BJ (cell line): ENCODE measurements at regions of chr1 and their contacts with region 1.

Region 1: DNA sequence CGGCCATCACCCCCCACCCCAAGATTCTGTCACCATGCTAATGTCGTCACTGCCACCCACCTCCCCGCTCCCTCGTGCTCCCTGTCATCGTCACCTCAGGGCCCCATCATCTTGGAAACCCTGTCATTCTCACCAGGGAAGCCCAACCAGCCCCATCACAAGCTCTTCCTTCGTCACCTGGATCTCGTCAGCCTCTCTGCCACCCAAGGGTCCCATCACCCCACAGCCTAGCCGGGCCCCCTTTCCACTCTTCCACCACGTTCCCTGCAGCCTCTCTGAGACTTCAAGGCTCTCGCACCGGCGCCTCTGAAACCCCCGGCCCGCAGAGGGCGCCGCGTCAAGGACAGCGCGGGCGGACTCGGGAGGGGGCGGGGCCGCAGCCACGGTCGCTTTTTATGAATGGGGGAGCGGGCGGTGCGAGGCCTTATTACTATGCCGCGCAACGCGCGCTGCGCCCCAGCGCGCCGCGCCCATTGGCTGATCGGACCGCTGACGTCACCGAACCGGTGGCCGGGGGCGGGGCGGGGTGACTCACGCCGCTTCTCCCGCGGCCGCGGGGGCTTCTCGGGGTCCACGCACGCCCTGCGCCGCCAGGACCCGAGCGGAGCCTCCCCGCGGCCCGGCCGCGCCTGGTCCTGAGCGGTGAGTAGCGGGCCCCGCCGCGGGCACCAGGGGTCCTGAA is at the start of gene GPR3:
- DNase-seq: no peak
- H3K4me3 ChIP-seq: peak within 1 kb of the TSS; percentile 70
- H3K27me3 ChIP-seq: no peaks in the 10 kb centered on the region
- CTCF ChIP-seq: peak; percentile 77
- polyA plus RNA-seq, gene GPR3: 1.0 and 1.8 TPM in 2 replicates

Region 2: DNA sequence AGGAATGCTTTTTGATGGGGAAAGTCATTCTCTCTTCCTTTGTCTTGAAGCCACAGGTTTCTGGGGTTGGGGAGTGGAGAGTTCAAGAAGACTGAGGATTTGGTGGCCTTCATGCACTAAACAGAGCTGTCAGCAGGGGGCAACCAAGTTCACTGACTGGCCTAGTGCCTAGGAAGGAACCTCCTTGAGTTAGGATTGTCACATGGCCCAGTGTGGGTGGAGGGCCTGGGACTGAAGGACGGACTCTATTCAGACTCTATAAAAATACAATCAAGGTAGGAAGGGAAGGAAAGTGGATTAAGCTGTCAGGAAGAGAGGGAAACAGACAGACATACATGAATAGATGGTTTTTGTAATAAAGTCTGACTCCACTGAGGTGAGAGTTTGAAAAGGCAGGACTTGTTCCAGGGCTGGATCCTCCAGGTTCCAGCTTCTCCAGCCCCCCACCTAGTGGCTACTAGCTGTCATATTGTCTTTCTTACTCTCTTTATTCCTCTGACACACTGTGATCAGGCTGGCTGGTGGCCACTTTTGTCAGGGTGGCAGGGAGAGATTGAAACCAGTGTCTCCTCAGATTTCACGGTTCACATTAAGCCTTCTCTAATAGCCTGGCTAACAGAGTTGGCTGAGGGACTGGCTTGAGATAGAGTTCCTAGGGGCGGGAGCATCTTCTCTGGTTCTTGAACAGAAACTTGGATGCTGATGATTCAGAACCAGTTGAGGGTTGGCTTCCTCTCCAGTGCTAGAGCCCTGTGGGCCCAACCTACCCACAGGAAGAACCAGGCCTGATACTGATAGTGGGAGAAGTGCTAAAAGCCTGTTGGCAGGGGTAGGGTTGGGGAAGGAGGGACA is 1116.4 kb before region 1 on chr1:
- CTCF ChIA-PET with region 1: no interaction called
- POLR2A ChIA-PET with region 1: no interaction called
- DNase-seq: peak; percentile 93
- H3K4me3 ChIP-seq: no peak overlapping the region
- H3K27me3 ChIP-seq: no peaks in the 10 kb centered on the region
- CTCF ChIP-seq: peak; percentile 81

Region 3: DNA sequence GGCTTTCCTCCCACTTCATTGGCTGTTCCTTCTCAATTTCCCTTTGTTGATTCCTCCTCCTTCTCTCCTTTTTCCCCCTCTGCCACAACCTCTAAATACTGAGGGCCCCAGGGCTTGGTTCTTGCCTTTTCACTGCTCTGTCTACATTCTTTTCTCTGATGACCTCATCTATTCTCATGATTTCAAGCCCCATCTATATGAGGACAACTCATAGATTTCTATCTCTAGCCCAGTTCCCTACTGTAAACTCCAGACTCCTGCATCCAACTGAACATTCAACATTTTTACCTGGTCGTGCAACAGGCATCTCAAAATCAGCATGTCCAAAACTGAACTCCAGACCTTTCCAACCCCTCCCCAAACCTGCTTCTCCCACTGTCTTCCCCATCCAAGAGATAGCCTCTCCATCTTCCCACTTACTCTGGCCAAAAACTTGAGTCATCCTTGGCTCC is 225.9 kb before region 1 on chr1:
- CTCF ChIA-PET with region 1: no interaction called
- POLR2A ChIA-PET with region 1: no interaction called
- DNase-seq: no peak
- H3K4me3 ChIP-seq: no peak overlapping the region
- H3K27me3 ChIP-seq: no peaks in the 10 kb centered on the region
- CTCF ChIP-seq: no peak

Region 4: DNA sequence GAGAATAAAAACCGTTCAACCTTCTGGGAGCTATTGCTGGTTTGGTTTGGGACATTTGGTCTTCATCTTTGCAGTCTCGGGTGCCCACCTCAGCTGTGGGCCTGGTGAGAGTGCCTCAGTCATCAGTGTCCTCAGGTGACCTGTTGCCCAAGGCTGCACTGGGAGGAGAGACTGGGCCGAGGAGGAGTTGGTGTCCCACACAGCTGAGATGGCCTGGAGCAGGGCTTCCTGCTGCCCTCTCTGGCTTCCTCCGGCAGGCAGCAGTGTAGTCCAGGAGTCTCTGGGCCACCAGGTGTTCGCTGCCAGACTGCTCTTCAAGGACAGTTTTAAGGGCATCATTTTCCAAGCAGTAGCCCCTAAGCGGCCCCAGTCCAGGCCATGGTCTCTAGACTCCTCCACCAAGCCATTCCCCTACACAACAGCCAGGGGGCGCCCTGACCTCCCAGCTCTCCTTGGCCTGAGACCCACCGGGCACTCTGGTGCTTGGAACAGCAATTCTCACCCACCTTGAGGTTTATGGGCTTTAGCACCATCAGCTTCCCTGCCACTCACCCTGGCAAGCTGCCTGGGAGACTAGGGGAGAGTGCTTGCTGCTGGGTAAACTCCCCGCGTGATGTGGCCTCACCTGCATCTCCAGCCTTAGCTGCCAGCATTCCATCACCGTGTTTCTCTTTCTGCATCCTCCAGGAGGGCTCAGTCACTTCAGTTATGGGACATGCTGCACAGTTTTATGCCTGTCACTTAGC is 59.5 kb before region 1 on chr1:
- CTCF ChIA-PET with region 1: interaction called, 39 read pairs
- POLR2A ChIA-PET with region 1: no interaction called
- DNase-seq: no peak
- H3K4me3 ChIP-seq: no peak overlapping the region
- H3K27me3 ChIP-seq: no peaks in the 10 kb centered on the region
- CTCF ChIP-seq: peak; percentile 93

Region 5: GRCh38 chr1:27357281-27358037 is 34.8 kb before region 1 on chr1:
- CTCF ChIA-PET with region 1: interaction called, 15 read pairs
- POLR2A ChIA-PET with region 1: no interaction called
- DNase-seq: no peak
- H3K4me3 ChIP-seq: no peak overlapping the region
- H3K27me3 ChIP-seq: no peaks in the 10 kb centered on the region
- CTCF ChIP-seq: peak; percentile 91

Region 6: DNA sequence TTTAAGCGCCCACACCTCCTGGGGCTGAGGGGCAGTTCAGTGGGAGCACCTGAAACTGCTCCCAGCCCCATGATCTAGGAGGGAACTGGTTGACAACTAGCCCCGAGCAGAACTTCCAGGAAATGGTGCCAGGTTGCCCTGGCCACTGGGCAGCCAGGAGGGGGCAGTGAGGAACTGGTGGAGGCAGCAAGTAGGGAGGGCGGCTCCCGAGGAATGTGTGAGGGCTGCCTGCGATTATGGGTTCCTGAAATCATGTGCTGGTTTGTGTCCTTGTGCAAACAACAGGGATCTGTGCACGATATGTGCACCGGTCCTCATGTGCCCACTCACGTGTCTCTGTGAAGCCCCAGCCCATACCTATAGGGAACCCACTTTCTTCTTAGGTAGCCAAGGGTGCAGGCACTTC is 10.1 kb after region 1 on chr1:
- CTCF ChIA-PET with region 1: interaction called, 11 read pairs
- POLR2A ChIA-PET with region 1: no interaction called
- DNase-seq: no peak
- H3K4me3 ChIP-seq: no peak overlapping the region
- H3K27me3 ChIP-seq: no peaks in the 10 kb centered on the region
- CTCF ChIP-seq: peak; percentile 79

Region 7: DNA sequence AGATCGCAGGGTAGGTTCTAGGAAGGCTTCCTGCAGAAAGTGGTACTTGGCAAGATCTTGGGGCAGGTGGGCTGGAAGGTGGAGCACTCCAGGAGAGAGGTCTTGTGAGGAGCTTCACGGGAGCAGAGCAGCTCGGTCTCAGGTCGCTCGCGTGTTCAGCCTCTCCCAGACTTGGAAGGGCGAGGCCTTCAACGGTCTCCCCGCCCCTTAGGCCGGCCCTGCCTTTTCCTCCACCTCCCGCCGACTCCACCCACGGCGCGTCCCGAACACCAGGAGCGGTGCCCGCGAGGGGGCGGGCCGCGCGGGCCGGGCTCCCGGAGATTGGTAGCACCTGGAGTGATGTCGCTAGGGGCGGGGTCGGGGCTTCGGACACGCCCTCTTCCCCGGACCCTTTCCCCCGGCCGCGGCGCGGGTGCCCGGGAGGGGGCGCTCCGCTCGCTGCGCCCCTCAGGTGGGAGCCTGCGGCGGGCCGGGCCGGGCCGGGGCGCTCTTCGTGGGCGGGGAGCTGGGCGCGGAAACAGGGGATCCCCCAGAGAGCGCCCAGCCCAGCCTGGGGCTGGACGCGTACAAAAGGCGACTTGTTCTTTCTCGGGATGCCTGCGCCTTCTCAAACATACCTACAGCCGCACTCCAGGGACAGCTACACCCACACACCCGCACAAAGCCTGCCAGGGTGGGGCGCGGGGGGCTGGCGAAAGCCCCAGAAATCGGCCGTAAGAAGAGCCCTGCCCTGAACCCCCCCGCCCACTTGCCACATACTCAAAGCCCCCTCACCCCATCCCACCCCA is 176.3 kb after region 1 on chr1:
- CTCF ChIA-PET with region 1: interaction called, 12 read pairs
- POLR2A ChIA-PET with region 1: no interaction called
- DNase-seq: peak; percentile 60
- H3K4me3 ChIP-seq: peak overlapping the region; percentile 17
- H3K27me3 ChIP-seq: no peaks in the 10 kb centered on the region
- CTCF ChIP-seq: peak; percentile 47; the same call in 1 of the 2 replicates

Region 8: DNA sequence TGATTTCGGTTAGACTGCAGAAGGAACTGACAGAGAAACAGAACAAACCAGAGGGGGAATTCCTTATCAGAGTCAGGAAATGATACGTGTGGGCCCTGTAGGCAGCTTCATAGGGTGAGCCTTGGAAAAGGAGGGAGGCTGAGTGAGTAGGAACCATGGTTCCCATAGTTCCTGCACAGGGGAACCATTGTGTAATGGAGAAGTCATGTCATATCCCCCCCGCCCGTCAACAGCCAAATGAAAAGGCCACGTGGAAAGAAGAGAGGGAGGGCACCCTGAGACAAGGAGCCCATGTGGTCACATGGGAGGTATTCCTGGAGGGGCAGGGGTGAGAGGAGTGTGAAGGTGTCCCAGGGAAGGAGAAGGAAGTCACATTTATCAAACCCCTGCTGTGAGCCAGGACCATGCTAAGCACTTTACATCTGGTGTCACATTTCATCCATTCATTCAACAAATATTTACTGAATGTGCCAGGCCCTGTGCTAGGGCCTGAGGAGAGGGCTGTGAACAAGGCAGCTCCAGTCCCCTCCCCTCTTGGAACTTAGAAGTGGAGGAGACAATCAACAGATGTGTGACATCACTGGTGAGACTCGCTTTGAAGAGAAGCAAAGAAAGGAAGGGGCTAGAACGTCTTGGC is 258.4 kb after region 1 on chr1:
- CTCF ChIA-PET with region 1: no interaction called
- POLR2A ChIA-PET with region 1: no interaction called
- DNase-seq: peak; percentile 41
- H3K4me3 ChIP-seq: no peak overlapping the region
- H3K27me3 ChIP-seq: no peaks in the 10 kb centered on the region
- CTCF ChIP-seq: no peak

Region 9: DNA sequence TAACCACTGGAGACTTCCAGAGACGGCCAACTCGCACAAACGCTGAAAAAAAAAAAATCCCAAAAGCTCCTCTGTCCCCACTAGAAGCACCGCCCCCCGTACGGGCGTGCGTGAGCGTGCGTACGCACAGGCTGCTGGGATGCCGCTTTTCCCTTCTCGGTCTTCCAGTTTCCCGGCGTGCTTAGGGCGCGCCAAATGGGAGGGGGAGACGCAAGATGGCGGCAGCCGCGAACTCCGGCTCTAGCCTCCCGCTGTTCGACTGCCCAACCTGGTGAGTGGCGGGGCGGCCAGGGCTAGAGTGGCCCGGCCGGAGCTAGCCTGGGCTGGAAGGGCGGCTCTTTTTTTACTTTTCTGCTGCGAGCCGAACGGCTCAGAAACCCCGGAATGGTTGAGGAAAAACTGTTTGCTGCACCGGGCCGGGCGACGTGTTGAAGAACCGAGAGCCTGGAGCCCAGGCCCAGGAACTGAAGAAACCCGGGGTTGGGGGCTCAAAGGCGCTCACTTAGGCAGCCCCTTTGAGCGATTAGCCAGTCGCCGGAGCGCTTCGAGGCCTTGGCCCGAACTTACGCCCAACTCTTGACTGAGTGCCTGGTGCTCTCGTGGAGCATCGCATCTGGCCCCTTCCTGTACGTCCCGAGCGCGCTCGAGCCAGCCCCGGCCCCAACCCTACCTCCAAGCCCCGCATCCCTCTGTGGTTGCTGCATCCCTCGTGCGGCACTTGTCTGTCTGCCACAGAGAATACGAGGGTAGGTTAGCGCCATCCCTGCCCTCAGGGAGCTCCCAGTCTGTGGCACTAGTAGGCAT is 438.6 kb after region 1 on chr1 and contains the start of gene PPP1R8:
- CTCF ChIA-PET with region 1: no interaction called
- POLR2A ChIA-PET with region 1: no interaction called
- DNase-seq: peak; percentile 79
- H3K4me3 ChIP-seq: peak within 1 kb of the TSS; percentile 69
- H3K27me3 ChIP-seq: no peaks in the 10 kb centered on the region
- CTCF ChIP-seq: no peak
- polyA plus RNA-seq, gene PPP1R8: 54.7 and 59.8 TPM in 2 replicates